ENCODE measurements at regions of chr1 and their contacts with region 1.

Region 1: GRCh38 chr1:77961392-77961791 is 17.5 kb downstream of the FUBP1 start:
- DNase-seq: no peak
- H3K4me3 ChIP-seq: no peak overlapping the region
- H3K27ac ChIP-seq: no peak overlapping the region
- H3K4me1 ChIP-seq: no peaks in the 10 kb centered on the region
- H3K27me3 ChIP-seq: no peaks in the 10 kb centered on the region
- CTCF ChIP-seq: no peak

Region 2: GRCh38 chr1:77697441-77697840 is 264.0 kb before region 1 on chr1:
- intact Hi-C with region 1: no loop called
- DNase-seq: no peak
- H3K4me3 ChIP-seq: no peak overlapping the region
- H3K27ac ChIP-seq: no peak overlapping the region
- H3K4me1 ChIP-seq: no peaks in the 10 kb centered on the region
- H3K27me3 ChIP-seq: no peaks in the 10 kb centered on the region
- CTCF ChIP-seq: no peak

Region 3: DNA sequence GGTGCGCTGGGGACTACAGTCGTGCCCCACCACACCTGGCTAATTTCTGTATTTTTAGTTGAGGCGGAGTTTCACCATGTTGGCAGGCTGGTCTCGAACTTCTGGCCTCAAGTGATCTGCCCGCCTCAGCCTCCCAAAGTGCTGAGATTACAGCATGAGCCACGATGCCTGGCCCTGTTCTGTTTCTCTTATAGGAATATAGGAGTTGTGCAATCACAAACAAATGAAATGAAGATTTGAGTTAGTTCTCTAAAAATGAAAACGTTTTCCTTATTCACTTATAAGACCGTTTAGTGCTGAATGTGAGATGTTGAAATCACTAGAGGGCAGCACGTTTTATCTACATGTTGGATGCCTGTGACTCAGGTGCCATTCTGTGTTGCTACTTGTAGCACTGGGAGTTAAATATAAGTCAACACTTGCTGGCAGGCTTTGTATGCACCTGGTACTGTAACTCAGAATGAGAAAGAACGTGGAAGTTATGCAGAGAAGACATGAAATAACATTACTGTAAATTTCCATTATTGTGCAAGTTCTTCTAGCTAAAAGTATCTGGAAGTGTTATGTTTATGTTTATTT is 136.2 kb before region 1 on chr1:
- intact Hi-C with region 1: loop called (anchors 10 kb)
- DNase-seq: no peak
- H3K4me3 ChIP-seq: no peak overlapping the region
- H3K27ac ChIP-seq: no peak overlapping the region
- H3K4me1 ChIP-seq: no peaks in the 10 kb centered on the region
- H3K27me3 ChIP-seq: no peaks in the 10 kb centered on the region
- CTCF ChIP-seq: peak; percentile 15

Region 4: GRCh38 chr1:77900687-77901293 is 60.6 kb before region 1 on chr1:
- intact Hi-C with region 1: no loop called
- DNase-seq: peak; percentile 23
- H3K4me3 ChIP-seq: no peak overlapping the region
- H3K27ac ChIP-seq: no peak overlapping the region
- H3K4me1 ChIP-seq: no peaks in the 10 kb centered on the region
- H3K27me3 ChIP-seq: no peaks in the 10 kb centered on the region
- CTCF ChIP-seq: peak; percentile 45

Measured in colonic mucosa (tissue), 4 donors.